A673 (cell line): ENCODE measurements at regions of chr9 and their contacts with region 1.

Region 1: DNA sequence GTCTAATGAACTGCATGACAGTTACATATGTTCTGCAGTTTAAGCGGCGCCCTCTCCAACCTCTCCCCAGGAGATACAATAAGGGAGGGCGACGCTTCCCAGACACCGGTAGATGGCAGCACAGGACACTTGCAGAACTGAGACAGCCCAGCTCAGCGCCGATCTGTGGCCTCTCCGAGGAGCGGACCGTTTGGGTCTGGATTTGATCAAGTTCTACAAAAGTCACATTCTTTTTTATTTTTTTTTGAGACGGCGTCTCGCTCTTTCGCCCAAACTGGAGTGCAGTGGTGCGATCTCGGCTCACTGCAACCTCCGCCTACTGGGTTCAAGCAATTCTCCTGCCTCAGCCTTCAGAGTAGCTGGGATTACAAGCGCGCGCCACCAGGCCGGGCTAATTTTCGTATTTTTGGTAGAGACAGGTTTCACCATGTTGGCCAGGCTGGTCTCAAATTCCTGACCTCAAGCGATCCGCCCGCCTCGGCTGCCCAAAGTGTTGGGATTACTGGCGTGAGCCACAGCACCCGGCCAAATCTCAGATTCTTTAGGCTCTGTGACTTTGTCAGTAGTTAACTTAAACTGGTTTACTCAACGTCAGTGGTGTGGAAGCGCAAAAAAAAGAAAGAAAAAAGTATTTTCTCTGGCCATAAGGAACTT is 1.4 kb upstream of the ATOSB start:
- DNase-seq: peak; percentile 95
- H3K4me3 ChIP-seq: peak overlapping the region; percentile 53
- H3K27ac ChIP-seq: no peak overlapping the region
- H3K4me1 ChIP-seq: peaks cover 23% of the 10 kb centered on the region
- H3K27me3 ChIP-seq: no peaks in the 10 kb centered on the region
- CTCF ChIP-seq: peak; percentile 91

Region 2: DNA sequence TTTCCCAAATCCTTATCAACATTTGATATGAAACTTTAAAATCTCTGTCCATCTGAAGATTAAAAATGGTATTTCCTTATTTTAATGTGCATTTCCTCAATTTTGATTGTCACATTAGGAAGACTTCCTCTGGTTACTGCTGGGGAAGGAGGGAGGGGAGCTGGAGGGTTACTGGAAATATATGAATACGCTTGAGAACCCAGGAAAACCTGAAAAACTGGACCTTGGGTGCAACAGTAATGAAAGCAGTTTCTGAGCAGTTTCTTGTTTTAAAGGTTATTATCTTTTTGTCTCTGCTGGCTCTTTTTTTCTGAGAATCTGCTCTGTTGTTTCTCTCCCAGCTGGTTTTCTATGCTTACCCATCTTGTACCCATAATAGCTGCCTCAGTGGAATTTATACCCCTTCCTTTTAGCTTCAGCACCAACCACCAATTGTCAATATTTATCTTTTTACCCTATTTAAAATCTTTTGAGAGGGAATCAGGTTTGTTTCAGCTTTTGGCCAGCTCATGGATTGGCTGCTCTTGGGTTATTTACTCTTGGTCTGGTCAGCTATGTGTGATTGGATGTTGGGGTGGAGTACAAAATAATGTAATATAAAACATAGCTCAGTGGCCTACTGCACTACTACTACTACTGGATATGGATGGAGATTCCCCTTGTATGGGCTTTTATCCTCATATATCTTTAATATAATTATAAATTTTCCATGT is 112.2 kb after region 1 on chr9:
- CTCF ChIA-PET with region 1: no interaction called
- POLR2A ChIA-PET with region 1: no interaction called
- intact Hi-C with region 1: no loop called
- DNase-seq: no peak
- H3K4me3 ChIP-seq: no peak overlapping the region
- H3K27ac ChIP-seq: no peak overlapping the region
- H3K4me1 ChIP-seq: no peaks in the 10 kb centered on the region
- H3K27me3 ChIP-seq: no peaks in the 10 kb centered on the region
- CTCF ChIP-seq: no peak

Region 3: GRCh38 chr9:35258676-35259474 is 141.8 kb after region 1 on chr9:
- CTCF ChIA-PET with region 1: interaction called, 9 read pairs
- POLR2A ChIA-PET with region 1: no interaction called
- intact Hi-C with region 1: loop called (anchors 1 kb)
- DNase-seq: peak; percentile 87
- H3K4me3 ChIP-seq: no peak overlapping the region
- H3K27ac ChIP-seq: no peak overlapping the region
- H3K4me1 ChIP-seq: no peaks in the 10 kb centered on the region
- H3K27me3 ChIP-seq: no peaks in the 10 kb centered on the region
- CTCF ChIP-seq: peak; percentile 79

Region 4: DNA sequence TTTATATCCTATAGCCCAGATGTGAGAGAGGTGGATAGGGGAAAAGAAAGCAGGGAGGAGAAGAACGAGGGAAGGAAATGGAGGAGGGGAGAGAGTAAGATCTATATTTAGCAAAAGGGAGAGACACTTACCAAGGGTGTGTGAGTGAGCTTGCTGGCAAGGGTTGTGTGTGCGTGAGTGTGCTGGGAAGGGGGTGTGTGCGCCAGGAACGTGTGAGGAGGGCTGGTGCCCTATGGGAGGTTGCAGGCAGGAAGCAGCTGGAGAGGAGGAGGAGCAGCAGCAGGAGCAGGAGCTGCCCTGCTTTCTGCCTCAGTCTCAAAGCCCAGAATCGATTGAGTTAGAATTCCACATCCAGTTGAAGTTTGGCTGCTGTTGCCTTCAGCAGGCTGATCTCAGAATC is 224.6 kb after region 1 on chr9:
- CTCF ChIA-PET with region 1: no interaction called
- POLR2A ChIA-PET with region 1: no interaction called
- intact Hi-C with region 1: no loop called
- DNase-seq: peak; percentile 26
- H3K4me3 ChIP-seq: no peak overlapping the region
- H3K27ac ChIP-seq: no peak overlapping the region
- H3K4me1 ChIP-seq: peaks cover 14% of the 10 kb centered on the region
- H3K27me3 ChIP-seq: no peaks in the 10 kb centered on the region
- CTCF ChIP-seq: no peak

Region 5: GRCh38 chr9:35385042-35385441 is 268.0 kb after region 1 on chr9:
- CTCF ChIA-PET with region 1: no interaction called
- POLR2A ChIA-PET with region 1: no interaction called
- intact Hi-C with region 1: loop called (anchors 10 kb)
- DNase-seq: no peak
- H3K4me3 ChIP-seq: no peak overlapping the region
- H3K27ac ChIP-seq: no peak overlapping the region
- H3K4me1 ChIP-seq: peaks cover 14% of the 10 kb centered on the region
- H3K27me3 ChIP-seq: no peaks in the 10 kb centered on the region
- CTCF ChIP-seq: peak; percentile 38; the same call in 1 of the 2 replicates

Region 6: DNA sequence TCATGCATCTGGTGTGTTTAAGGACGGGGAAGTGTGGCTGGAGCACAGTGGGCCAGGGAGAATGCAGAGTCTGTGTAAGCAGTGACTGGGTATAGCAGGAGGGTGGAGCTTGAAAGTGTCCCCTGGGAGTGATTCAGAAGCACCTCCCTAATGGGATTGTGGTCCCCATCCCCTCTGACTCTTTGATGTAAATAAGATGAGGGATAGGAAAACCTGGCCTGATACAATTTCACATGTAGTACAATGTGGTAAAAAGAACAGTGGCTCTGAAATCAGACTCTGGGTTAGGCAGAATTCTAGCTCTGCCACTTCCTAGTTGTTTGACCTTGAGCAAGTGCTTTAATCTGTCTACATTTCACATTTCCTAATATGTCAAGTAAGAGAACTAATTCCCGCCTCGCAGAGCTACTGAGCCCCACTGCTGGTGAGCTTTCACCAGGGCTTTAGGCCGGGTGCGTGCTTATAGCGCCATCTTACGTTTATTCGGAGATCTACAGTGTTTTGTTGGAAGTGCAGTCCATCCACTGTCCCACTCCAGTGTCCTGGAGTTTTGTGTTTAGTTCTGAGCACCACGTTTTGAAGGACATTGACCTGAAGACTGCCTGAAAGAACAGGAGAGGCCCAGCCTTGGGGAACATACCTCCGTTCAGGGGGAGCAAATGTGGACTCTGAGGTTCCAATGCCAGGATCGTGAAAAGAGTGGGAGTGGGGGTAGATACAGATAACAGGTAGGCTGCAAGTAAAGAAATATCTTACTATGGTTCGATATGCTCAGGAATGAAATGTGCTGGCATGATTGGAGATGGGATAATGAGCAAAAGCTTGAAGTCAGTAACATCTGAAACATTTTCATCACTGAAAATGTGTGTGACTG is 436.9 kb after region 1 on chr9:
- CTCF ChIA-PET with region 1: interaction called, 17 read pairs
- POLR2A ChIA-PET with region 1: no interaction called
- intact Hi-C with region 1: loop called (anchors 1 kb)
- DNase-seq: peak; percentile 90
- H3K4me3 ChIP-seq: no peak overlapping the region
- H3K27ac ChIP-seq: no peak overlapping the region
- H3K4me1 ChIP-seq: peaks cover 3% of the 10 kb centered on the region
- H3K27me3 ChIP-seq: no peaks in the 10 kb centered on the region
- CTCF ChIP-seq: peak; percentile 91

Region 7: DNA sequence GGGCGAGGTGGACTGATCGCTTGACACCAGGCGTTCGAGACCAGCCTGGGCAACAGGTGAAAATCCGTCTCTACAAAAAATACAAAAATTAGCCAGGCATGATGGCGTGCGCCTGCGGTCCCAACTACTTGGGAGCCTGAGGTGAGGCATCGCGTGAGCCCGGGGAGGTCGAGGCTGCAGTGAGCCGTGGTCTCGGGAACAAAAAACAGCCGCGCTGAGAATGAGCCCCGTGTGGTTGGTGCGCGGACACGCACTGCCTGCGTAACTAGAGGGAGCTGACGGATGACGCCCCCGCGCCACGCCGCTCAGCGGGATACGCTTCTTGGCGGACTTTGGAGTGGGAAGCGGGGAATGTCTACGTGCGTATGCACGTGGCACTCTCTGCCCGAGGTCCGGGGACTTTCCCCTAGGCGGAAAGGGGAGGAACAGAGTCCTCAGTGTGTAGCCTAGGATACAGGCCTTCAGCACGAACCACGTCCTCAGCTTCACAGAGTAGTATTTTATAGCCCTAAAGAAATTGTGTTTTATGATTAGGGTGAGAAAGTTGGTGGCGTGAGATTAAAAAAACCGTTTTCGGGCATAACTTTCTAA is 540.6 kb after region 1 on chr9 and contains the start of gene RMRP:
- CTCF ChIA-PET with region 1: no interaction called
- POLR2A ChIA-PET with region 1: no interaction called
- intact Hi-C with region 1: loop called (anchors 5 kb)
- DNase-seq: peak; percentile 100
- H3K4me3 ChIP-seq: peak within 1 kb of the TSS; percentile 74
- H3K27ac ChIP-seq: peak within 1 kb of the TSS; percentile 97
- H3K4me1 ChIP-seq: peaks cover 11% of the 10 kb centered on the region
- H3K27me3 ChIP-seq: no peaks in the 10 kb centered on the region
- CTCF ChIP-seq: peak; percentile 30; the same call in 1 of the 2 replicates
- total RNA-seq, gene RMRP: 13,531 and 14,573 TPM in 2 replicates